ENCODE measurements at regions of chr1 and their contacts with region 1.

Region 1: DNA sequence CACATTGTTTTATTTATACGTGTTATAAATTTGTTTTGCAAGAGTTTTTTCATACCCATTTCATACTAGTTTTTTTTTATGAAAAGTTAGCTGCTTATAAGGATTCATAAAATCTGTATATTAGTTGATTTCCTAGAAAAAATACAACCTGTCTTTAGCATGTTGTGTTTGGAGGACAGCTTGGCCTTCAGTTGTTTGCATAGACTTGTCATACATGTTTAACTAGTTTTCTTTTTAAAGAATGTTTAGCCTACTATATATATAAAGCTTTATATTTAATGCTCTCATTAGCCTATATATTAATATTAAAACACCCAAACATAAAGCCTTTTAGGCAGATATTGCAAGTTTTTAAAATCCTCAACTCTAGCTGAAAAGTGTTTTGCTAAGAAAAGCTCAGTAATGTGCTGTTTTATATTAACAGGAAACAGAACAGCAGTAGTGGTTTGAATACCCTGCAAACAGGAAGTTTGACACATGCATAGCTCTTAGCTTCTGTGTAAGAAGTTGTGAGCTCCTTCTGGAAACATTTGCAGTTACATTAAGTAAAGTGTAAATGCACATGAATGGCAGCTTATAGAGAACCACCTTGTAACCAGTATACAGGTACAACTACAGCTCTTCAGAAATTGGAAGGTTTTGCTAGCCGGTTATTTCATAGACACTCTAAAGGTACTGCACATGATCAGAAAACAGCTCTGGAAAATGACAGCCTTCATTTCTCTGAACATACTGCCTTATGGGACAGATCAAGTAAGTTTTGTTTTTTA is at the start of gene PRKACB:
- DNase-seq: peak; percentile 87
- H3K4me3 ChIP-seq: peak within 1 kb of the TSS; percentile 38 to 99 (median 99)
- H3K27ac ChIP-seq: peak within 1 kb of the TSS; percentile 95
- H3K4me1 ChIP-seq: peaks cover 25% of the 10 kb centered on the region
- H3K27me3 ChIP-seq: no peaks in the 10 kb centered on the region
- CTCF ChIP-seq: no peak
- POLR2A ChIP-seq: peak; percentile 73
- total RNA-seq, gene PRKACB: 72.6 and 77.5 TPM in 2 replicates

Region 2: GRCh38 chr1:83791821-83792437 is 352.1 kb before region 1 on chr1:
- CTCF ChIA-PET with region 1: no interaction called
- POLR2A ChIA-PET with region 1: no interaction called
- dilution Hi-C with region 1: no loop called
- intact Hi-C with region 1: no loop called
- DNase-seq: no peak
- H3K4me3 ChIP-seq: no peak overlapping the region
- H3K27ac ChIP-seq: no peak overlapping the region
- H3K4me1 ChIP-seq: no peaks in the 10 kb centered on the region
- H3K27me3 ChIP-seq: no peaks in the 10 kb centered on the region
- CTCF ChIP-seq: no peak
- POLR2A ChIP-seq: no peak

Region 3: GRCh38 chr1:84156210-84156621 is 12.2 kb after region 1 on chr1:
- CTCF ChIA-PET with region 1: interaction called, 19 read pairs
- POLR2A ChIA-PET with region 1: no interaction called
- dilution Hi-C with region 1: no loop called
- intact Hi-C with region 1: loop called (anchors 1 kb)
- DNase-seq: peak; percentile 89
- H3K4me3 ChIP-seq: no peak overlapping the region
- H3K27ac ChIP-seq: peak overlapping the region; percentile 30
- H3K4me1 ChIP-seq: peaks cover 17% of the 10 kb centered on the region
- H3K27me3 ChIP-seq: no peaks in the 10 kb centered on the region
- CTCF ChIP-seq: no peak
- POLR2A ChIP-seq: no peak

Region 4: GRCh38 chr1:84181350-84182005 is 37.5 kb after region 1 on chr1:
- CTCF ChIA-PET with region 1: interaction called, 37 read pairs
- POLR2A ChIA-PET with region 1: interaction called, 3 read pairs
- dilution Hi-C with region 1: no loop called
- intact Hi-C with region 1: loop called (anchors 1 kb)
- DNase-seq: no peak
- H3K4me3 ChIP-seq: no peak overlapping the region
- H3K27ac ChIP-seq: no peak overlapping the region
- H3K4me1 ChIP-seq: peaks cover 3% of the 10 kb centered on the region
- H3K27me3 ChIP-seq: no peaks in the 10 kb centered on the region
- CTCF ChIP-seq: no peak
- POLR2A ChIP-seq: no peak

Region 5: DNA sequence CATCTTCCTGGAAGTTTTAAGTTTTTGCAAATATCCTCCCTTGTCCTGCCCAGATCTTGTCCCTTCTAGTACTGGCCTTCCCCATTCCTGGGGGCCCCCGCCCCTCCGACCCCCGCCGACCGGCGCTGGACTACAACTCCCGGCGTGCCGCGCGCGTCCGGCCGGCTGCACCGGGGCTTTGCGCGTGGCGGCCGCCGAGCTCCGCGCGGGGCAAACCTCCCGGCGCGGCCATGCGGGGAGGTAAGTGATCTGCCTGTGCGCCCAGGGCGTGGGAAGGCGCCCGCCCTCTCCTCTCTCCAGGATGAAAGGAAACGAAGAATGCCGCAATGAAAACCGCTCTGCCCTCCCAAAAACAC is 154.3 kb after region 1 on chr1:
- CTCF ChIA-PET with region 1: interaction called, 20 read pairs
- POLR2A ChIA-PET with region 1: interaction called, 5 read pairs
- dilution Hi-C with region 1: no loop called
- intact Hi-C with region 1: loop called (anchors 1 kb)
- DNase-seq: peak; percentile 61
- H3K4me3 ChIP-seq: peak overlapping the region; percentile 72 to 94 (median 78)
- H3K27ac ChIP-seq: peak overlapping the region; percentile 75
- H3K4me1 ChIP-seq: peaks cover 46% of the 10 kb centered on the region
- H3K27me3 ChIP-seq: no peaks in the 10 kb centered on the region
- CTCF ChIP-seq: no peak
- POLR2A ChIP-seq: peak; percentile 73

Region 6: DNA sequence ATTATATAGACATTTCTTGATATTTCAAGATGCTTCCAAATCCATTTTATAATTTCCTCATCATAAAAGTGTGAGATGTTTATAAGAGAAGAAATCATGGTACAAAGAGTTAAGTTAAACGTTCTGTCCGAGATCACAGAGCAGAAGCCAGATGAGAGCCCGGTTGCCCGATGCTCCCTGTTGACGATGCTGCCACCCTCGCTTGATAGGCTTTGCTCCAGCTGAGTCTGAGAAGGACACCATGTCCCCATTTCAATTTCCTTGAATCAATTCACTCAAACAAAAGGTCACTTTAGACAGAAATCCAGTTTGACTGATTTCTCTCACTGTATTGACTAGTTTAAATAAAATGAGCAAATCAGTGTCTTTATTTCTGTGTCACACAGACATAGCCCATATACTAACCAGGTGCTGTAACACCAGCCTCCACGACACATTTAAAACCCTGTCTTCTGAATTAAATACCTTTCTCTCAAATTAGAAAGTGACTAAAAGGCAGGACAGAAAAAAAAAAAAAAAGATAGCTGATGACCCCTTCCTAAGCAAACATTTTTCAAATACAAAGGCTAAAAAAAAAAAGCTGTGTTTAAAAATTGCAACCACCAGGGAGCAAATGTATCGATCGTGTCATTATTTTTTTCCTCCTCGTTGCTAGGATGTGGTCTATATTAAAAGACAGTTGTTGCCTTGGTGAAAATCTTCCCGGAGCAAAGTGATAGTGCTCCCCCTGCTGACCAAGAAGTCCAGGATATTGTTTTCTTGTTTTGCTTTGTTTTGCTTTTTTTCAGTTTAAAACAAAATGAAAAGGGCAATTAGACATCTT is 289.5 kb after region 1 on chr1:
- CTCF ChIA-PET with region 1: interaction called, 201 read pairs
- POLR2A ChIA-PET with region 1: interaction called, 13 read pairs
- dilution Hi-C with region 1: loop called (anchors 25 kb)
- intact Hi-C with region 1: loop called (anchors 1 kb)
- DNase-seq: peak; percentile 81
- H3K4me3 ChIP-seq: peak overlapping the region in 1 of 3 experiments; percentile 52
- H3K27ac ChIP-seq: peak overlapping the region; percentile 69
- H3K4me1 ChIP-seq: peaks cover 5% of the 10 kb centered on the region
- H3K27me3 ChIP-seq: no peaks in the 10 kb centered on the region
- CTCF ChIP-seq: peak; percentile 64 to 67
- POLR2A ChIP-seq: no peak

Region 7: DNA sequence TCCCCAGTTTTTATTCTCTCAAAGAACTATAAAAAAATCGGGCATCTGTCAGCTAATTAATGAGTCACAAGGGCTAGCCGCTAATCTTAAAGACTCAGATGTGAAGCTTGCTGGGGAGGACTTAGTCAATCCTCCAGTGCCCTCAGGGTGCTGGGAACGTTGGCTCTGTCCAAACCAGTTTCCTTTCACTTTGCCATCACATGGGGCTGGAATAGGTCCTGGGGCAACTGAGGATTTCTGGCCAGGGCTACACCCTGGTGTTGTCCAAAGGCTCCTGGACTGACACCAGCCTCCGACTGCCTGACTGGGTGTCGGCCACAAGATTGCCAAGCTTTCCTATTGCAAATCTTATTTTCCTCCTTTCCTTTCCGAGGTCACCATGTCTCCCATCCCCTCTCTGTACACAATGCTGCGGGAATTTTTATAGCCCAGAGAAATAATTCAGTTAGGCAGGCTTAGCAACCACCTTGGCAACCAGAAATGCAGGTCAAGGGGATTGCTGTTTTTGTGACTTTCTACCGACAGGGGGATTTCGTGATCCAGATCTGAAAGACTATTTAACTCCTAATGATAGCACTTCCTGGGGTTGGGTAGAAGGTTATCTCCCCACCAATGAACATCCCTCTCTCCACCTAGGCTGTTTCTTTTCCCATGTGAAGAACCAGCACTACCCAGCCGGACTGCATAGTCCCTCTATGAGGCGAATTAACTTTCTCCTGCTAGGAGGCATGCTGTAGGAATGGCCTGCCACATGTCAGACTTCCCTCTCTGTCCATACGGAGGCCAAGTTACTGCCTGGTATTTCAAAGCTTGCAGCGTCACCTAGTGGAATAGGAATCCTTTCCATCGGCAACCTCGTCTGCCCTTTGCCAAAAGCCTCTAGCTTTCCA is 460.2 kb after region 1 on chr1:
- CTCF ChIA-PET with region 1: interaction called, 54 read pairs
- POLR2A ChIA-PET with region 1: no interaction called
- dilution Hi-C with region 1: no loop called
- intact Hi-C with region 1: loop called (anchors 1 kb)
- DNase-seq: peak; percentile 91
- H3K4me3 ChIP-seq: peak overlapping the region in 2 of 3 experiments; percentile 11 to 46
- H3K27ac ChIP-seq: peak overlapping the region; percentile 88
- H3K4me1 ChIP-seq: peaks cover 30% of the 10 kb centered on the region
- H3K27me3 ChIP-seq: no peaks in the 10 kb centered on the region
- CTCF ChIP-seq: peak; percentile 66 to 77
- POLR2A ChIP-seq: no peak

Region 8: DNA sequence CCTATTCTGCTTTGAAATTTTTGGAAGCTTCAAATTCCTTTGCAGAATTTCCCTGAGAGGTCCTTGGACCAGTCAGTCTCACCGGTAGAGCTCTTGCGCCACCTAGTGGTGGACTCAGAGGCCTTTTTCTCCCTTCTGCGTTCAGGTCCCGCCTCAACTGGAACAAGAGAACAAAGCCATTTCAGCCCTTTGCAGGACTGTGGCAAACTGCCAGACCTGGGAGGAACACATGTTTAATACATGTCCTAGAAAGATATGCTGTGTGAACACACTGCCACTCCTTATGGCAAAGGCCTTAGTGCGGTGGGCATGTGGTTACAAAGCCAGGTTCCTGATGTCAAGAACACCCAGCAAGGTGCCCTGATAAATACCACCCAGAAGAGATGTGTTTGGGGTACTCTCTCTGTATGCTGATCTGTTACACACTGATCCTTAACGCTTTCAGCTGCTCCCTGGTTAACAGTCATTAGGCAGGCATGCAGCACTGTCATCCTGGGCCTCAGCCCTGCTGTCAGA is 628.5 kb after region 1 on chr1:
- CTCF ChIA-PET with region 1: interaction called, 18 read pairs
- POLR2A ChIA-PET with region 1: no interaction called
- dilution Hi-C with region 1: no loop called
- intact Hi-C with region 1: loop called (anchors 1 kb)
- DNase-seq: peak; percentile 74
- H3K4me3 ChIP-seq: no peak overlapping the region
- H3K27ac ChIP-seq: no peak overlapping the region
- H3K4me1 ChIP-seq: no peaks in the 10 kb centered on the region
- H3K27me3 ChIP-seq: peaks cover 2 to 12% of the 10 kb centered on the region in 2 experiments
- CTCF ChIP-seq: peak; percentile 83 to 87
- POLR2A ChIP-seq: no peak

Region 9: DNA sequence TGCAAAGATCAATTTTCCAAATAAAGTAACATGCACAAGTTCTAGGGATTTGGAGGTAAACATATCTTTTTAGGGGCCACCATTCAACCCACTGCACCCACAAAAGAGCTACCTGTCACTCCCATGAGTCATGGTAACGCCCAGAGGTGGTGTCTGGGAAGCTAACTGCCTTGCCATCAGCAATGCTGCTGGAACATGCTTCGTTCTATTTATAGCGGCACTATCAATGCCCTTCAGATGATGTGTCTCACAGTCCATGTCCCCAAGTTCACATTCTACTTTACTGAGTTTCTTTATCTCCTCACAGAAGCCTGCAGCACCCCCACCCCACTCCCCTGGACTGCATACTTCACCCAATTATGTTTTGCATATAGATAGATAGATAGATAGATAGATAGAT is 653.6 kb after region 1 on chr1:
- CTCF ChIA-PET with region 1: no interaction called
- POLR2A ChIA-PET with region 1: no interaction called
- dilution Hi-C with region 1: no loop called
- intact Hi-C with region 1: no loop called
- DNase-seq: no peak
- H3K4me3 ChIP-seq: no peak overlapping the region
- H3K27ac ChIP-seq: no peak overlapping the region
- H3K4me1 ChIP-seq: no peaks in the 10 kb centered on the region
- H3K27me3 ChIP-seq: peaks cover 2 to 5% of the 10 kb centered on the region in 2 experiments
- CTCF ChIP-seq: no peak
- POLR2A ChIP-seq: no peak

Measured in endothelial cell of umbilical vein (primary cell).